ENCODE measurements at regions of chr12 and their contacts with region 1.

Region 1: GRCh38 chr12:64796208-64796845 is 28.1 kb upstream of the TBC1D30 start:
- DNase-seq: peak; percentile 81
- ATAC-seq: peak; percentile 80
- H3K4me3 Mint-ChIP-seq: no peak overlapping the region
- H3K27ac Mint-ChIP-seq: no peak overlapping the region
- H3K4me1 Mint-ChIP-seq: no peaks in the 10 kb centered on the region
- H3K27me3 Mint-ChIP-seq: peaks cover 24% of the 10 kb centered on the region

Region 2: DNA sequence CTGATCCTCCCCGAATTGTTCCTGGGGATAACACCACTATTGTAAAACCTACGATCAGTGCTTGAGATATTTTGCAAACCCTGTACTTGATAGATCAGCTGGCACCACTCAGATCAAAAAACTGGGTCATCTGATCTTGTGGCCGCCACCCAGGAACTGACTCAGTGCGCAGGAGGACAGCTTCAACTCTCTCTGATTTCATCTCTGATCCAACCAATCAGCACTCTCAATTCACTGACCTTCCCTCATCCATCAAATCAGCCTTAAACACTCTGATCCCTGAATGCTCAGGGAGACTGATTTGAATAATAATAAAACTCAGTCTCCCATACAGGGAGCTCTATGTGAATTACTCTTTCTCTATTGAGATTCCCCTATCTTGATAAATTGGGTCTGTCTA is 396.3 kb before region 1 on chr12:
- CTCF ChIA-PET with region 1: no interaction called
- POLR2A ChIA-PET with region 1: no interaction called
- DNase-seq: no peak
- ATAC-seq: no peak
- H3K4me3 Mint-ChIP-seq: no peak overlapping the region
- H3K27ac Mint-ChIP-seq: no peak overlapping the region
- H3K4me1 Mint-ChIP-seq: peaks cover 9% of the 10 kb centered on the region
- H3K27me3 Mint-ChIP-seq: no peaks in the 10 kb centered on the region

Region 3: GRCh38 chr12:64752833-64753238 is 43.5 kb before region 1 on chr12:
- CTCF ChIA-PET with region 1: no interaction called
- POLR2A ChIA-PET with region 1: no interaction called
- DNase-seq: no peak
- ATAC-seq: no peak
- H3K4me3 Mint-ChIP-seq: no peak overlapping the region
- H3K27ac Mint-ChIP-seq: no peak overlapping the region
- H3K4me1 Mint-ChIP-seq: peaks cover 28% of the 10 kb centered on the region
- H3K27me3 Mint-ChIP-seq: no peaks in the 10 kb centered on the region

Region 4: DNA sequence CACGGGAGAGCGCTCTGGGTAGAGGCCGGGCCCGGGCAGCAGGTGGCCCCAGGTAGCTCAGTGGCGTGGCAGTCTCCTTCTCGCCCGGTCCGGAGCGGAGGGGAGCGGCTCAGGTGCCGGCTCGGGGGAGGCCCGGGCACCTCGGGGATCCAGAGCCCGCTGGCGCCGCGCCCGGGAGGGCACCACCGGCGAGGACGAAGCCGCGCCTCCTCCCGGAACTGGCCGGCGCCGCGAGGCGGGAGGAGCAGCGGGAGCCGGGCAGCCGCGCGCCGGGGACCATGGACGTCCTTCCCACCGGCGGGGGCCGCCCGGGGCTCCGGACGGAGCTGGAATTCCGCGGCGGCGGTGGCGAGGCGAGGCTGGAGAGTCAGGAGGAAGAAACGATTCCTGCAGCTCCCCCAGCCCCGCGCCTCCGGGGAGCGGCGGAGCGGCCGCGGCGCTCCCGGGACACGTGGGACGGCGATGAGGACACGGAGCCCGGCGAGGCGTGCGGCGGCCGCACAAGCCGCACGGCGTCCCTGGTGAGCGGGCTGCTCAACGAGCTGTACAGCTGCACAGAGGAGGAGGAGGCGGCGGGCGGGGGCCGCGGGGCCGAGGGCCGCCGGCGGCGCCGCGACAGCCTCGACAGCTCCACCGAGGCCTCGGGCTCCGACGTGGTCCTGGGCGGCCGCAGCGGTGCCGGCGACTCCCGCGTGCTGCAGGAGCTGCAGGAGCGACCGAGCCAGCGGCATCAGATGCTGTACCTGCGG is 15.6 kb before region 1 on chr12:
- CTCF ChIA-PET with region 1: interaction called, 26 read pairs
- POLR2A ChIA-PET with region 1: no interaction called
- DNase-seq: no peak
- ATAC-seq: peak; percentile 72
- H3K4me3 Mint-ChIP-seq: peak overlapping the region; percentile 39
- H3K27ac Mint-ChIP-seq: no peak overlapping the region
- H3K4me1 Mint-ChIP-seq: peaks cover 17% of the 10 kb centered on the region
- H3K27me3 Mint-ChIP-seq: peaks cover 67% of the 10 kb centered on the region

Region 5: GRCh38 chr12:64836862-64837261 is 40.5 kb after region 1 on chr12:
- CTCF ChIA-PET with region 1: no interaction called
- POLR2A ChIA-PET with region 1: no interaction called
- DNase-seq: no peak
- ATAC-seq: no peak
- H3K4me3 Mint-ChIP-seq: no peak overlapping the region
- H3K27ac Mint-ChIP-seq: no peak overlapping the region
- H3K4me1 Mint-ChIP-seq: no peaks in the 10 kb centered on the region
- H3K27me3 Mint-ChIP-seq: peaks cover 6% of the 10 kb centered on the region

Measured in activated CD8-positive, alpha-beta T cell treated with anti-CD3 and anti-CD28 coated beads, Interleukin-2, amount 10 ng/mL, durations not matched to agents 7 days and 5 days (primary cell).